Breast epithelium (tissue), 4 donors: ENCODE measurements at regions of chr5 and their contacts with region 1.

Region 1: DNA sequence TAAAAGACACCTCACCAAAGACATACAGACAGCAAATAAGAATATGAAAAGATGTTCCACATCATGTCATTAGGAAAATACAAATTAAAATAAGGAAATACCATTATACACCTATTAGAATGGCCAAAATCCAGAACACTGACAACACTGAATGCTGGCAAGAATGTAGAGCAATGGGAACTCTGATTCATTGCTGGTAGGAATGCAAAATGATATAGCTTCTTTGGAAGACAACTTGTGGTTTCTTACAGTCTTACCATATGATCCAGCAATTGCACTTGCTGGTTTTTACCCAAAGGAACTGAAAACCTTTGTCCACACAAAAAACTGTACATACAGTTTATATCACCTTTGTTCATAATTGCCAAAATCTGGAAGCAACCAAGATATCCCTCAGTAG is 6.5 kb downstream of the TMEM161B start:
- DNase-seq: no peak
- H3K4me3 ChIP-seq: no peak overlapping the region
- H3K27ac ChIP-seq: no peak overlapping the region
- H3K4me1 ChIP-seq: no peaks in the 10 kb centered on the region
- H3K27me3 ChIP-seq: no peaks in the 10 kb centered on the region
- CTCF ChIP-seq: no peak
- POLR2A ChIP-seq: no peak

Region 2: GRCh38 chr5:88244657-88245056 is 17.5 kb before region 1 on chr5:
- intact Hi-C with region 1: loop called (anchors 2 kb)
- DNase-seq: no peak
- H3K4me3 ChIP-seq: no peak overlapping the region
- H3K27ac ChIP-seq: no peak overlapping the region
- H3K4me1 ChIP-seq: no peaks in the 10 kb centered on the region
- H3K27me3 ChIP-seq: no peaks in the 10 kb centered on the region
- CTCF ChIP-seq: no peak
- POLR2A ChIP-seq: no peak